ENCODE measurements at regions of chr5 and their contacts with region 1.

Region 1: DNA sequence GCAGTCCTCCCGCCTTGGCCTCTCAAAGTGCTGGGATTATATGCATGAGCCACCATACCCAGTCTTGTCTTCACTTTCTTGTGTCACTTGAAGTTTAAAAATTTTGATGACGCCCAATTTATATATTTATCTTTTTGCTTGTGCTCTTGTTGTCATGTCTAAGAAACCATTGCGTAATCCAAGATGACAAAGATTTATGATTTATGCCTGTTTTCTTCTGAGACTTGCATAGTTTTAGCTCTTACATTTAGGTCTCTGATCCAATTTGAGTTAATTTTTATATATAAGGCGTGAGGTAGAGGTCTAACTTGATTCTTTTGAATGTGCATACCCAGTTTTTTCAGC is 18.6 kb downstream of the ANKHD1 start:
- DNase-seq: no peak
- ATAC-seq: no peak
- H3K4me3 ChIP-seq: no peak overlapping the region
- H3K27ac ChIP-seq: no peak overlapping the region
- H3K4me1 ChIP-seq: peaks cover 0 to 50% (median 16%) of the 10 kb centered on the region in 9 donors
- H3K27me3 ChIP-seq: no peaks in the 10 kb centered on the region
- CTCF ChIP-seq: no peak

Region 2: GRCh38 chr5:140408750-140409256 is 11.4 kb before region 1 on chr5:
- intact Hi-C with region 1: loop called in 1 of 10 experiments (anchors 1 kb)
- DNase-seq: no peak
- ATAC-seq: peak in 5 of 8 donors; percentile 35 to 65 (median 49)
- H3K4me3 ChIP-seq: no peak overlapping the region
- H3K27ac ChIP-seq: no peak overlapping the region
- H3K4me1 ChIP-seq: peaks cover 0 to 78% (median 37%) of the 10 kb centered on the region in 9 donors
- H3K27me3 ChIP-seq: no peaks in the 10 kb centered on the region
- CTCF ChIP-seq: peak in 1 of 9 donors; percentile 30

Region 3: DNA sequence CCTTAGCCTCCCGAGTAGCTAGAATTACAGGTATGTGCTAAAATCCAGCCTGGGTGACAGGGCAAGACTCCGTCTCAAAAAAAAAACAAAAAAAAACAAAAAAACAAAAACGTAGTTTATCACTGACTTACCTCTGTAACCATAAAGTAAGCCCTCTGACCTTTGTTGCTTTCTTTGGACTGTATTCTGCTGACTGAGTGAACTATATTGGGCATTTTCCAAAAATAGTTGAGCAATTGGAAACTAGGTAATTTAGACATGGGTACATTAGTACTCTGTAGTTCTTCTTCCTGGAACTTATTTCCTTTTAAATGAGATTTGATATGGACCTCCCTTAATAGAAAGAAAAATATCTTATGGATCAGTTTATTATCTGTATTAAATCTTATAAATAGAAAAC is 48.0 kb after region 1 on chr5:
- intact Hi-C with region 1: no loop called
- DNase-seq: no peak
- ATAC-seq: peak in 3 of 8 donors; percentile 59 to 75 (median 62)
- H3K4me3 ChIP-seq: no peak overlapping the region
- H3K27ac ChIP-seq: no peak overlapping the region
- H3K4me1 ChIP-seq: peaks cover 0 to 14% (median 0%) of the 10 kb centered on the region in 9 donors
- H3K27me3 ChIP-seq: no peaks in the 10 kb centered on the region
- CTCF ChIP-seq: no peak

Region 4: DNA sequence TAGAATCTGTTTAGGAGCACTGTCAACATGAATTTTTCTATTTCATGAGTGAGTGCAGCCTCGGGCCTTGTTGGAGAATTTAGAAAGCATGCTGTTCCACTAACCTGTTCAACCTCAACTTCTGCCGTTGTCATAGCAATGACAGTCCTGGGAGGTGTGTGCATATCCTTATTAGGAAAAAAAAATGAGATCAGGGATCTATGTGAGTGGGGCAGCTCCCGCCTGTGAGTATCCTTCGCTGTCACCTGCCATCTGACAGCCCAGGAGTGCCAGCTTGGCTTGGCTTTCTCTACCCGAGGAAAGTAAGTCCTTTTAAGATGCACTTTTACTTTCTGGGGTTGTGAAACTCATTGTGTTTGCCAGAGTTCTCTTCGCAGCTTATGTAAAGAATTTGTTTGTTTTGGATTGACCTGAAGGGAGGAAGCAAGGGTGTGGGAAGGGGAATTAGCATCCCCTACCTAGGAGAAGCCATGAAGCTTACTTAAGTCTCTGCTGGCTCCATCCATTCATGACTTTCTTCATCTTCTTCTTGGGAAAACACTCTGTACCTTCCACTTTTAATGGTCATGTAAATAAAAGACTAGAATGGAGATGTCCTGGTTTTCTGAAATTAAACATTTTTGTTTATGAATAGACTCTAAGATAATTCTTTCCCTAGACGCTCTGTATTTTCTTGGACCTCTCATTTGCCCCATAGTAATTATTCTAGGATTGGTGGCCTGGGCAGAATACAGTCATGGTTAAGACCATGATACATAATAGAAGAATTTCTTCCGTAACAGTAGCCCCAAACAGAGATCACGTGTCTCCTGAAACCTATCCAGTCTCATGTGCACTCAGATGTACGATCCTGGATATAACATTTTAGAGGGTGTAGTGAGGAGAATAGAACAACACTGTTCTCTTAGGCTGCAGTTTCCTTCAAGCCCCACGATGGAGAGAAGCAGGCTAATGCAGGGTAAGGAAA is 568.1 kb after region 1 on chr5:
- intact Hi-C with region 1: loop called in 1 of 10 experiments (anchors 5 kb)
- DNase-seq: no peak
- ATAC-seq: no peak
- H3K4me3 ChIP-seq: no peak overlapping the region
- H3K27ac ChIP-seq: no peak overlapping the region
- H3K4me1 ChIP-seq: no peaks in the 10 kb centered on the region
- H3K27me3 ChIP-seq: peaks cover 0 to 23% (median 3%) of the 10 kb centered on the region in 7 donors
- CTCF ChIP-seq: no peak

Region 5: GRCh38 chr5:141127305-141127704 is 707.1 kb after region 1 on chr5:
- intact Hi-C with region 1: no loop called
- DNase-seq: no peak
- ATAC-seq: no peak
- H3K4me3 ChIP-seq: no peak overlapping the region
- H3K27ac ChIP-seq: no peak overlapping the region
- H3K4me1 ChIP-seq: no peaks in the 10 kb centered on the region
- H3K27me3 ChIP-seq: peaks cover 0 to 33% (median 11%) of the 10 kb centered on the region in 7 donors
- CTCF ChIP-seq: no peak

Measured in heart right ventricle (tissue), 16 donors.